HEK293 (cell line): ENCODE measurements at regions of chr2 and their contacts with region 1.

Region 1: DNA sequence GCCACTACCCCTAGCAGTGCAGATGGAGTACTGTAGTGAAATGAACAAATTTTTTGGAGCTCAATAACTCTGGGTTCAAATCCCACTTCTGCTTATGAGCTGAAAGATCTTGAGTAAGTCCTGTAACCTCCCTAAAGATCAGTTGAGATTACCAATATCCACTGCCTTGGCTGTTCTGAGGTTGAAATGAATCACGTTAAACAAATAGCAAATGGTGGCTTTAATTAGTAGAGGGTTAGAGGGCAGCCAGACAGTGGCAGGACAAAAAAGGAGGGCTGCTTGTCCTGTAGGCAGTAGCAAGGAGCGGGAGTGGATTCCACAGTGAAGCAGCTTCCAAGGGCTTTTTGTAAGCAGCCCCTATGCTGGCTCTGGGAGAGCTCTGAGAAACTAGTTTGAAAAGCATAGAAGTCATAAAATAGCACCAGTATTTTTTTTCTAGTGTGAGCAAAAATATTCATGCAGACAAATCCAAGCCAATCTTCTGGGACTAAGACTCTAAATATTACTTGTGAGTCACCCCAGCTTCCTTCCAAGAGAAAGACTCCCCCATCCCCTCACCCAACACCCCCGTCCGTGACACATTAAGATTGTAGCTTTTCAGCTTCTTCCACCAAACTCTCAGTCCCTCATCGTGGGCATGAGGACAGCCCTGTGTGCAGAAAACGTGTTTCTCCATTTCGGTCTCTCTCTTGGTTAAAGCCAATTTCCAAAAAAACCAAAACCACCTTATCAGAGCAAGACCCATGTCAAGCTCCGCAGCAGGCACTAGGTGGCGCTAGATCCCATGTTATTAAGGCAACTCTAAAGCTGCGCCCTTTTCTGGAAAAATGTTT is 123.5 kb upstream of the LGALSL start:
- H3K4me3 ChIP-seq: no peak overlapping the region
- H3K27ac ChIP-seq: no peak overlapping the region
- H3K4me1 ChIP-seq: no peaks in the 10 kb centered on the region; the same call in 1 of the 2 replicates
- CTCF ChIP-seq: peak; percentile 65

Region 2: GRCh38 chr2:64052468-64053241 is 277.8 kb before region 1 on chr2:
- CTCF ChIA-PET with region 1: interaction called, 81 read pairs
- POLR2A ChIA-PET with region 1: no interaction called
- H3K4me3 ChIP-seq: no peak overlapping the region
- H3K27ac ChIP-seq: no peak overlapping the region
- H3K4me1 ChIP-seq: no peaks in the 10 kb centered on the region; the same call in 1 of the 2 replicates
- CTCF ChIP-seq: no peak

Region 3: GRCh38 chr2:64318476-64318748 is 12.1 kb before region 1 on chr2:
- CTCF ChIA-PET with region 1: interaction called, 12 read pairs
- POLR2A ChIA-PET with region 1: no interaction called
- H3K4me3 ChIP-seq: no peak overlapping the region
- H3K27ac ChIP-seq: no peak overlapping the region
- H3K4me1 ChIP-seq: no peaks in the 10 kb centered on the region
- CTCF ChIP-seq: no peak

Region 4: GRCh38 chr2:64356906-64357305 is 26.4 kb after region 1 on chr2:
- CTCF ChIA-PET with region 1: interaction called, 13 read pairs
- POLR2A ChIA-PET with region 1: no interaction called
- H3K4me3 ChIP-seq: no peak overlapping the region
- H3K27ac ChIP-seq: no peak overlapping the region
- H3K4me1 ChIP-seq: no peaks in the 10 kb centered on the region
- CTCF ChIP-seq: no peak

Region 5: GRCh38 chr2:64474121-64474571 is 143.6 kb after region 1 on chr2:
- CTCF ChIA-PET with region 1: interaction called, 12 read pairs
- POLR2A ChIA-PET with region 1: no interaction called
- H3K4me3 ChIP-seq: no peak overlapping the region
- H3K27ac ChIP-seq: no peak overlapping the region
- H3K4me1 ChIP-seq: no peaks in the 10 kb centered on the region
- CTCF ChIP-seq: no peak

Region 6: GRCh38 chr2:64488050-64488974 is 157.8 kb after region 1 on chr2:
- CTCF ChIA-PET with region 1: interaction called, 155 read pairs
- POLR2A ChIA-PET with region 1: interaction called, 4 read pairs
- H3K4me3 ChIP-seq: no peak overlapping the region
- H3K27ac ChIP-seq: no peak overlapping the region
- H3K4me1 ChIP-seq: no peaks in the 10 kb centered on the region
- CTCF ChIP-seq: peak; percentile 47

Region 7: GRCh38 chr2:64562148-64562784 is 231.8 kb after region 1 on chr2:
- CTCF ChIA-PET with region 1: interaction called, 30 read pairs
- POLR2A ChIA-PET with region 1: no interaction called
- H3K4me3 ChIP-seq: no peak overlapping the region
- H3K27ac ChIP-seq: no peak overlapping the region
- H3K4me1 ChIP-seq: peaks cover 21% of the 10 kb centered on the region
- CTCF ChIP-seq: no peak